CD4-positive, alpha-beta T cell (primary cell): ENCODE measurements at regions of chr6 and their contacts with region 1.

Region 1: GRCh38 chr6:11496152-11497060 is 41.1 kb upstream of the TMEM170B start:
- DNase-seq: peak; percentile 39 to 89 (median 62)
- ATAC-seq: peak; percentile 99
- H3K4me3 ChIP-seq: no peak overlapping the region
- H3K4me3 Mint-ChIP-seq: no peak overlapping the region
- H3K27ac ChIP-seq: no peak overlapping the region
- H3K27ac Mint-ChIP-seq: no peak overlapping the region
- H3K4me1 ChIP-seq: no peaks in the 10 kb centered on the region
- H3K4me1 Mint-ChIP-seq: no peaks in the 10 kb centered on the region
- H3K27me3 ChIP-seq: no peaks in the 10 kb centered on the region
- H3K27me3 Mint-ChIP-seq: no peaks in the 10 kb centered on the region
- CTCF ChIP-seq: peak; percentile 94

Region 2: DNA sequence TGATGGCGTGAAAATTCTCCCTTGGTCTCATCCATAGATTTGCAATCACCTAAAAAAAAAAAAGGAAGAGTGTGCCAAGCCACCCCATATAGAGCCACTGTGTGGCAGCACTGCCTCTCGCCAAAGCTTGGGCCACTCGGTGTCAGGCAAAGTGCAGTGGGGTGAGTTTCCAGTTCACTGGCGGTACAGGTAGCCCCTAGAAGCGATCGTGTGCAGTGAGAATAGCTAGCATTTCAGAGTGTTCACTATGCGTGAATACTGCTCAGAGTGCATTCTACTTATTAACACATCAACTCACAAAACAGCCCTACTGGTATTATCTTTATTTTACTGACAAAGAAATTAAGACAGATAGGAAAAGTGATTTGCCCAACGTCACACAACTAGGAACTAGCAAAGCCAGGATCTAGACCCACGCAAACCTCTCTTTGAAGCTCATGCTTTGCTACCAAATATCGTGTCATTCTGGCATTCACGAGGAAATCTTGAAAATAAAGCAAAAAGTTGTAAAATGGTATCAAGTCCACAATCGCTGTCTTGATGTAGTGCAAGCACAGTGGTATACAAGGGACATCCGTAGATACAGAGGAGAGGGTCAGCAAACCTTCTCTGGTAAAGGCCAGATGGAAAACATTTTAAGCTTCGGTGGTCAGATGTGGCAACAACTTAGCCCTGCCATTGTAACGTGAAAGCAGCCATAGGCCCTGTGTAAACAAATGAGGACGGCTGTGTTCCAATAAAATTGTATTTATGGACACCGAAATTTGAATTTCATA is 985.6 kb before region 1 on chr6:
- CTCF ChIA-PET with region 1: no interaction called
- POLR2A ChIA-PET with region 1: no interaction called
- intact Hi-C with region 1: loop called in 1 of 2 experiments (anchors 10 kb)
- DNase-seq: peak; percentile 7 to 60 (median 30)
- ATAC-seq: peak; percentile 80
- H3K4me3 ChIP-seq: no peak overlapping the region
- H3K4me3 Mint-ChIP-seq: no peak overlapping the region
- H3K27ac ChIP-seq: no peak overlapping the region
- H3K27ac Mint-ChIP-seq: no peak overlapping the region
- H3K4me1 ChIP-seq: peaks cover 3% of the 10 kb centered on the region
- H3K4me1 Mint-ChIP-seq: peaks cover 5% of the 10 kb centered on the region
- H3K27me3 ChIP-seq: no peaks in the 10 kb centered on the region
- H3K27me3 Mint-ChIP-seq: peaks cover 11% of the 10 kb centered on the region
- CTCF ChIP-seq: peak; percentile 57

Region 3: GRCh38 chr6:10954590-10955010 is 541.8 kb before region 1 on chr6:
- CTCF ChIA-PET with region 1: no interaction called
- POLR2A ChIA-PET with region 1: no interaction called
- intact Hi-C with region 1: loop called (anchors 10 kb)
- DNase-seq: peak; percentile 20 to 67 (median 41)
- ATAC-seq: no peak
- H3K4me3 ChIP-seq: no peak overlapping the region
- H3K4me3 Mint-ChIP-seq: no peak overlapping the region
- H3K27ac ChIP-seq: no peak overlapping the region
- H3K27ac Mint-ChIP-seq: no peak overlapping the region
- H3K4me1 ChIP-seq: no peaks in the 10 kb centered on the region
- H3K4me1 Mint-ChIP-seq: no peaks in the 10 kb centered on the region
- H3K27me3 ChIP-seq: peaks cover 10 to 21% of the 10 kb centered on the region in 2 experiments
- H3K27me3 Mint-ChIP-seq: peaks cover 18% of the 10 kb centered on the region
- CTCF ChIP-seq: peak; percentile 47

Region 4: GRCh38 chr6:11144393-11144851 is 352.0 kb before region 1 on chr6:
- CTCF ChIA-PET with region 1: interaction called, 28 read pairs
- POLR2A ChIA-PET with region 1: no interaction called
- intact Hi-C with region 1: loop called (anchors 1 kb)
- DNase-seq: peak; percentile 51 to 84 (median 64)
- ATAC-seq: peak; percentile 73
- H3K4me3 ChIP-seq: no peak overlapping the region
- H3K4me3 Mint-ChIP-seq: no peak overlapping the region
- H3K27ac ChIP-seq: no peak overlapping the region
- H3K27ac Mint-ChIP-seq: no peak overlapping the region
- H3K4me1 ChIP-seq: peaks cover 5% of the 10 kb centered on the region
- H3K4me1 Mint-ChIP-seq: no peaks in the 10 kb centered on the region
- H3K27me3 ChIP-seq: no peaks in the 10 kb centered on the region
- H3K27me3 Mint-ChIP-seq: no peaks in the 10 kb centered on the region
- CTCF ChIP-seq: peak; percentile 98

Region 5: GRCh38 chr6:11172501-11173332 is 323.7 kb before region 1 on chr6:
- CTCF ChIA-PET with region 1: interaction called, 4 read pairs
- POLR2A ChIA-PET with region 1: interaction called, 3 read pairs
- intact Hi-C with region 1: loop called (anchors 1 kb)
- DNase-seq: peak; percentile 58 to 84 (median 74)
- ATAC-seq: peak; percentile 81
- H3K4me3 ChIP-seq: peak overlapping the region; percentile 24
- H3K4me3 Mint-ChIP-seq: no peak overlapping the region
- H3K27ac ChIP-seq: no peak overlapping the region
- H3K27ac Mint-ChIP-seq: no peak overlapping the region
- H3K4me1 ChIP-seq: peaks cover 9% of the 10 kb centered on the region
- H3K4me1 Mint-ChIP-seq: peaks cover 9% of the 10 kb centered on the region
- H3K27me3 ChIP-seq: no peaks in the 10 kb centered on the region
- H3K27me3 Mint-ChIP-seq: no peaks in the 10 kb centered on the region
- CTCF ChIP-seq: peak; percentile 91

Region 6: DNA sequence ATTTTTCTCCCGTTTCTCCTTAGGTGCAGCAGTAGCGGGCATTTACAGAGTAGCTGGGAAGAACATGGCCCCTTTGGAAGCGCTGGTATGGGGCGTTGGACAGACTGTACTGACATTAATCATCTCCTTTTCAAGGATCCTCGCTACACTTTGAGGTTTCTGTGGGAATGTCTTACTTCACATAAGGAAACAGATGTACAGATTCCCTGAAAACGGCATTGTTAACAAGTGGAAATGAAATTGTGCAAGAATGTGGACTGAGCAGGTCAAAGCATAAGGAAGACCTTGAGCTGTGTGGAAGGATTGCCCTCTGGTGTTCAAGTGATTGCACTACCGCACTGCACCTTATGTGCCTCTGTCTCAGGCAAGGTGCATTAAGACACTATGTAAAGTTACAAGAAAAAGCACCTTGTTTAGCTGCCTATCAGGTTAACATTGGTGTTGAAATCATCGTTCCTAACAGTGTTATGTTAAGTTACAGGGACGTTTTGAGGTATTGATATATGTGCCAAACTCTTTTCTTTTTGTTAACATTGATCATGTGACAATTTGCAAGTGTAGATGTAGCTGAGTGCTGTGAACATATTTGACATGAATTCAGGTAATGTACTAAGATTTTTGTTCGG is 79.1 kb after region 1 on chr6:
- CTCF ChIA-PET with region 1: interaction called, 7 read pairs
- POLR2A ChIA-PET with region 1: no interaction called
- intact Hi-C with region 1: loop called in 1 of 2 experiments (anchors 5 kb)
- DNase-seq: peak in 13 of 14 experiments; percentile 7 to 76 (median 30)
- ATAC-seq: peak; percentile 95
- H3K4me3 ChIP-seq: no peak overlapping the region
- H3K4me3 Mint-ChIP-seq: no peak overlapping the region
- H3K27ac ChIP-seq: no peak overlapping the region
- H3K27ac Mint-ChIP-seq: no peak overlapping the region
- H3K4me1 ChIP-seq: no peaks in the 10 kb centered on the region
- H3K4me1 Mint-ChIP-seq: no peaks in the 10 kb centered on the region
- H3K27me3 ChIP-seq: no peaks in the 10 kb centered on the region
- H3K27me3 Mint-ChIP-seq: no peaks in the 10 kb centered on the region
- CTCF ChIP-seq: peak; percentile 73

Region 7: GRCh38 chr6:13302751-13303667 is 1806.6 kb after region 1 on chr6:
- CTCF ChIA-PET with region 1: no interaction called
- POLR2A ChIA-PET with region 1: no interaction called
- intact Hi-C with region 1: no loop called
- DNase-seq: peak in 7 of 14 experiments; percentile 1 to 83 (median 30)
- ATAC-seq: peak; percentile 81
- H3K4me3 ChIP-seq: no peak overlapping the region
- H3K4me3 Mint-ChIP-seq: no peak overlapping the region
- H3K27ac ChIP-seq: peak overlapping the region in 1 of 2 donors; percentile 57
- H3K27ac Mint-ChIP-seq: peak overlapping the region; percentile 47
- H3K4me1 ChIP-seq: peaks cover 14% of the 10 kb centered on the region
- H3K4me1 Mint-ChIP-seq: peaks cover 19% of the 10 kb centered on the region
- H3K27me3 ChIP-seq: no peaks in the 10 kb centered on the region
- H3K27me3 Mint-ChIP-seq: no peaks in the 10 kb centered on the region
- CTCF ChIP-seq: no peak